ENCODE measurements at regions of chr1 and their contacts with region 1.

Region 1: GRCh38 chr1:44701141-44701573 is 26.6 kb downstream of the ARMH1 start:
- DNase-seq: peak; percentile 22
- H3K27ac ChIP-seq: no peak overlapping the region
- CTCF ChIP-seq: no peak

Region 2: DNA sequence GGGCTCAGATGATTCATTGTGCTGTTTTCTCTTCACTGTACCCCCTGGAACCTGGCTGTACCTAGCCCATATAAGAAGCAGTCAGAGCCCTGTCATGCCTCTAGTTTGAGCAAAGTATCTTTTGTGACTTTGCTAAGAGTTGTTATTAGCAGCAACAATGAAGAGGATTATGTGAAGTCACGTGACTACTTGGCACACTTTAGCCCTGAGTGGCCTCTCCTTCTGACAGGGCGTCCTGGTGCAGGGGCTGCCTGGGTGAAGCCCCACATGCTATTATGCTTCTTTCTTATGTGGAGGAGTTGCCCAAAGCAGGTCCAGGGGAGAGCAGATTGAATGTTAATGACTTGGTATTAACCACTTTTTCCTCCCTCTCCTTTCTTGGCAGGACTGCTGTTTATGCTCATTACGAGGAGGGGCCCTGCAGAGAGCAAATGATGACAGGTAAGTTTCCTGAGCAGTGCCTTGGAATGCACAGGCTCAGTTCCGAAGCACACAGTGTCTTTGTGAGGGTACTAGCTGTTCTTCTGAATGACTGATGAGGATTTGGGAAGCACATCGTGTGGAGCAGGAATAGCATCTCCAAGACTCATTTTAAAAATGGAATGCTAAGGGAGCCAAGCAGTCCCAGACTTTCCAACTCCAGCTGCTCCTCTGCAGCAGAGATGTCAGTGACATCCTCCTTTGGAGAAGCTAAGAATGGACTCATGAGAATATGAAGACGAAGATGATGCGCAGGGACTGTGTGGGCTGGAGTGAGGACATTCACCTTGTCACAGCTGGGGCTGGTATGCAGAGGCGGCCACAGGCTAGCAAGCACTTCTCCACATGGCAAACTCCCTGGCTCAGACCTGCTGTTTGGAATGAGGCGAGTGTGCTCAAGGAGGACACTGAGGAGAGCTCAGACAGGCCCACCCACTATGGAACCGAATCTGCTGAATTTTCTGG is 1009.0 kb before region 1 on chr1:
- CTCF ChIA-PET with region 1: no interaction called
- POLR2A ChIA-PET with region 1: no interaction called
- DNase-seq: no peak
- H3K27ac ChIP-seq: no peak overlapping the region
- CTCF ChIP-seq: no peak

Region 3: GRCh38 chr1:44421374-44421982 is 279.7 kb before region 1 on chr1:
- CTCF ChIA-PET with region 1: no interaction called
- POLR2A ChIA-PET with region 1: interaction called, 12 read pairs
- DNase-seq: no peak
- H3K27ac ChIP-seq: no peak overlapping the region
- CTCF ChIP-seq: no peak